ENCODE measurements at regions of chr4 and their contacts with region 1.

Region 1: GRCh38 chr4:42519803-42520417 is 122.6 kb downstream of the SHISA3 start:
- DNase-seq: peak in 21 of 35 experiments; percentile 2 to 69 (median 24)
- ATAC-seq: peak in 3 of 4 experiments; percentile 35 to 57 (median 42)
- H3K4me3 ChIP-seq: no peak overlapping the region
- H3K4me3 Mint-ChIP-seq: no peak overlapping the region
- H3K27ac ChIP-seq: no peak overlapping the region
- H3K27ac Mint-ChIP-seq: no peak overlapping the region
- H3K4me1 ChIP-seq: no peaks in the 10 kb centered on the region
- H3K4me1 Mint-ChIP-seq: no peaks in the 10 kb centered on the region
- H3K27me3 ChIP-seq: no peaks in the 10 kb centered on the region
- H3K27me3 Mint-ChIP-seq: no peaks in the 10 kb centered on the region

Region 2: DNA sequence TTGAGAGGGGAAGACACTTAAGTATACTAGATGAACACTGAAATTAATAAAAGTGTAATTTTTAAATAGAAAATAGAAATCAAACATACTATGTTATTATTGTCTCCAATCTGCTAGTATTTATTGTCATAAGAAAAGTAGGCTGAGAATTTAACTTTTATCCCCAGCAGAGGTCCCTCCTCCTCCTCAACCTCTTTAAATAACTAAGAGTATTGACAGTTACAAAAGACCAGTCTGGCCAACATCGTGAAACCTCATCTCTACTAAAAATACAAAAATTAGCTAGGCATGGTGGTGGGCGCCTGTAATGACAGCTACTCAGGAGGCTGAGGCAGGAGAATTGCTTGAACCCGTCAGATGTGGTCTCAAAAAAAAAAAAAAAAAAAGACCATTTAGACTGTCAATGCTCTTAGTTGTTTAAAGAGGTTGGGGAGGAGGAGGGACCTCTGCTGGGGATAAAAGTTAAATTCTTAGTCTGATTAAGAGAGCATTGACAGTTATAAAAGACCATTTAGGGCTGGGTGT is 525.4 kb before region 1 on chr4:
- CTCF ChIA-PET with region 1: no interaction called
- POLR2A ChIA-PET with region 1: no interaction called
- DNase-seq: no peak
- ATAC-seq: no peak
- H3K4me3 ChIP-seq: no peak overlapping the region
- H3K4me3 Mint-ChIP-seq: no peak overlapping the region
- H3K27ac ChIP-seq: no peak overlapping the region
- H3K27ac Mint-ChIP-seq: no peak overlapping the region
- H3K4me1 ChIP-seq: peaks cover 14 to 16% of the 10 kb centered on the region in 2 experiments
- H3K4me1 Mint-ChIP-seq: peaks cover 41 to 50% (median 47%) of the 10 kb centered on the region in 3 donors
- H3K27me3 ChIP-seq: no peaks in the 10 kb centered on the region
- H3K27me3 Mint-ChIP-seq: no peaks in the 10 kb centered on the region

Region 3: GRCh38 chr4:42371306-42372252 is 148.3 kb before region 1 on chr4:
- CTCF ChIA-PET with region 1: interaction called, 4 to 29 read pairs
- POLR2A ChIA-PET with region 1: no interaction called
- DNase-seq: peak in 1 of 35 experiments; percentile 38
- ATAC-seq: no peak
- H3K4me3 ChIP-seq: no peak overlapping the region
- H3K4me3 Mint-ChIP-seq: no peak overlapping the region
- H3K27ac ChIP-seq: no peak overlapping the region
- H3K27ac Mint-ChIP-seq: no peak overlapping the region
- H3K4me1 ChIP-seq: no peaks in the 10 kb centered on the region
- H3K4me1 Mint-ChIP-seq: no peaks in the 10 kb centered on the region
- H3K27me3 ChIP-seq: peaks cover 0 to 12% of the 10 kb centered on the region in 2 experiments
- H3K27me3 Mint-ChIP-seq: peaks cover 8 to 12% of the 10 kb centered on the region in 2 donors

Region 4: DNA sequence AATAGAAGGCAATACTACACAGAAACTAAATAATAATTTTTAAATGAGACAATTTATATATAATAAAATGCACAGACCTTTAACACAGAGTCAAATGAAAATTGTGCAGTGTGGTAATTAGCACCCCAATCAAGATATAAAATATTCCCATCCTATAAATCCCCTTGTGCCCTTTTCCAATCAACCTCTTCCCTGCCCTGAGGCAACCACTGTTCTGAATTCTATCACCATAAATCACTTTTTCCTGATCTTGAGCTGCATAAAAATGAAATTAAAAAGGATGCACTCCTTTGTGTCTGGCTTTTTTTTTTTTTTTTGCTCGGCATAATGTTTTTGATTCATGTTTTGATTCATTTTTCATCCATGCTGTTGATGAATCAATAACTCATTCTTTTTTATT is 30.0 kb after region 1 on chr4:
- CTCF ChIA-PET with region 1: interaction called in 1 of 2 experiments, 12 read pairs
- POLR2A ChIA-PET with region 1: no interaction called
- DNase-seq: no peak
- ATAC-seq: no peak
- H3K4me3 ChIP-seq: no peak overlapping the region
- H3K4me3 Mint-ChIP-seq: no peak overlapping the region
- H3K27ac ChIP-seq: no peak overlapping the region
- H3K27ac Mint-ChIP-seq: no peak overlapping the region
- H3K4me1 ChIP-seq: peaks cover 0 to 2% of the 10 kb centered on the region in 2 experiments
- H3K4me1 Mint-ChIP-seq: no peaks in the 10 kb centered on the region
- H3K27me3 ChIP-seq: no peaks in the 10 kb centered on the region
- H3K27me3 Mint-ChIP-seq: no peaks in the 10 kb centered on the region

Region 5: GRCh38 chr4:42855779-42856178 is 335.9 kb after region 1 on chr4:
- CTCF ChIA-PET with region 1: no interaction called
- POLR2A ChIA-PET with region 1: no interaction called
- DNase-seq: no peak
- ATAC-seq: no peak
- H3K4me3 ChIP-seq: no peak overlapping the region
- H3K4me3 Mint-ChIP-seq: no peak overlapping the region
- H3K27ac ChIP-seq: no peak overlapping the region
- H3K27ac Mint-ChIP-seq: no peak overlapping the region
- H3K4me1 ChIP-seq: no peaks in the 10 kb centered on the region
- H3K4me1 Mint-ChIP-seq: no peaks in the 10 kb centered on the region
- H3K27me3 ChIP-seq: peaks cover 0 to 2% of the 10 kb centered on the region in 2 experiments
- H3K27me3 Mint-ChIP-seq: peaks cover 15 to 16% of the 10 kb centered on the region in 2 donors

Measured in T-cell (primary cell).